Activated CD4-positive, alpha-beta T cell treated with anti-CD3 and anti-CD28 coated beads for 36 hours (primary cell): ENCODE measurements at regions of chr7 and their contacts with region 1.

Region 1: DNA sequence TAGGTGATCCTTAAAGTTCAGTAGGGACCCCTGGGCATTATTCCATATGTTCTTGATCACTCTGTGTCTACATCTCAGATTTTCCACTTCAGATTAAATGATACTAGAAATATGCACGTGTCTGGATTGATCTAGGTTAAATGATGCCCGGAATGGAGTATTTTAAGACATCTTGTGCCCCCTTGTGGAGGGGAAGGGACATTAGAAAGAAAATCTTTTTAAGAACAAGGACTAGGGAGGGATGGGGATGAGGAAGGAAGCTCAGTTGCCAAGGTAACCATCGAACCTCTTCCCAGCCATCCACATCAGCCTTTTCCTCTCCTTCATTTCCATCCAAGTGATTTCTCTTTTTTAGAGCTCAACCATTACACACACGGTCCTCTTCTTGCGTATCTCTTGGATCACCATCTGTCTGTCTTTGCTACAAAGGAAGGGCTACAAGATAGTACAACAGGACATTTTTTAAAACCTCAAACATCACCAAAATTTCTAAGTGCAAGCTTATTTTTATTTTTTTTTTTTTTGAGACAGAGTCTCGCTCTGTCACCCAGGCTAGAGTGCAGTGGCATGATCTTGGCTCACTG is 40.5 kb downstream of the PRSS2 start:
- DNase-seq: peak; percentile 52
- ATAC-seq: no peak
- H3K4me3 Mint-ChIP-seq: peak overlapping the region; percentile 68
- H3K27ac Mint-ChIP-seq: peak overlapping the region; percentile 99
- H3K4me1 Mint-ChIP-seq: peaks cover 83% of the 10 kb centered on the region
- H3K27me3 Mint-ChIP-seq: no peaks in the 10 kb centered on the region

Region 2: GRCh38 chr7:141737834-141738591 is 1073.2 kb before region 1 on chr7 and contains the start of gene SSBP1:
- CTCF ChIA-PET with region 1: no interaction called
- POLR2A ChIA-PET with region 1: interaction called, 3 read pairs
- intact Hi-C with region 1: loop called (anchors 2 to 10 kb)
- DNase-seq: peak; percentile 95
- ATAC-seq: peak; percentile 89
- H3K4me3 Mint-ChIP-seq: peak within 1 kb of the TSS; percentile 96
- H3K27ac Mint-ChIP-seq: peak within 1 kb of the TSS; percentile 97
- H3K4me1 Mint-ChIP-seq: peaks cover 40% of the 10 kb centered on the region
- H3K27me3 Mint-ChIP-seq: no peaks in the 10 kb centered on the region
- total RNA-seq, gene SSBP1: 183 to 245 TPM

Region 3: GRCh38 chr7:142385491-142386340 is 425.5 kb before region 1 on chr7:
- CTCF ChIA-PET with region 1: no interaction called
- POLR2A ChIA-PET with region 1: interaction called, 3 read pairs
- intact Hi-C with region 1: loop called (anchors 2 to 5 kb)
- DNase-seq: peak; percentile 72
- ATAC-seq: peak; percentile 50
- H3K4me3 Mint-ChIP-seq: no peak overlapping the region
- H3K27ac Mint-ChIP-seq: peak overlapping the region; percentile 67
- H3K4me1 Mint-ChIP-seq: peaks cover 27% of the 10 kb centered on the region
- H3K27me3 Mint-ChIP-seq: no peaks in the 10 kb centered on the region

Region 4: DNA sequence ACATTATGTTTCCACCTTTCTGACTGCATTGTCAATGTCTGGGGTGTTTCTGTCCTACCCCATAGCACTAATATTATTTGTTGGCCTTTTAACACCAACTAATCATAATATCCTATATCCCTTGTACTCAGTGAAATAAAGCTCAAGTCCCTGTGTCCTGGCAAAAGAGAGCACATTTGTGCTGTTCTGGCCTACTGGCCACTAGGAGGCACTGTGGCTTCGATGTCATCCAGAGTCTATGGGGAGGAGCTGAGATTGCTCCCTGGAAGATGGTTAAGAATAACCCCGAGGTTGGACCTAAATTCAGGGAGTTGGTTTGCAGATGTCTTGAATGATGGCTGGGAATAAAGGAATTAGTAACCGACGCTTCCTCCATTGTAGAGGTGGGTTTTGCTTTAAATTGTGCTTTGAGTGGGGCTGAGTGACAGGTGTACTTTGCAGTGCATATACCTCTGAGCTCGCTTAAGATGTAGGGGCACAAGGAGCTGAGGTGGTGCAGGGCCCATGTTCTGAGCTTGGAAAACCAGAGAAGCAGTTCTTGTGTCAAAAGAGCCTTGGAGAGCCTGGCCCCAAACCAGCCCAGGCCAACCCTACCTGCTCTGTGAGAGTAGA is 253.2 kb before region 1 on chr7:
- CTCF ChIA-PET with region 1: interaction called, 8 read pairs
- POLR2A ChIA-PET with region 1: no interaction called
- intact Hi-C with region 1: loop called in 1 of 2 experiments (anchors 2 kb)
- DNase-seq: peak; percentile 76
- ATAC-seq: peak; percentile 80
- H3K4me3 Mint-ChIP-seq: peak overlapping the region; percentile 13
- H3K27ac Mint-ChIP-seq: no peak overlapping the region
- H3K4me1 Mint-ChIP-seq: peaks cover 2% of the 10 kb centered on the region
- H3K27me3 Mint-ChIP-seq: no peaks in the 10 kb centered on the region

Region 5: GRCh38 chr7:142711746-142712619 is 99.3 kb before region 1 on chr7:
- CTCF ChIA-PET with region 1: interaction called, 9 read pairs
- POLR2A ChIA-PET with region 1: interaction called, 3 read pairs
- intact Hi-C with region 1: loop called in 1 of 2 experiments (anchors 1 kb)
- DNase-seq: peak; percentile 48
- ATAC-seq: peak; percentile 86
- H3K4me3 Mint-ChIP-seq: peak overlapping the region; percentile 67
- H3K27ac Mint-ChIP-seq: peak overlapping the region; percentile 85
- H3K4me1 Mint-ChIP-seq: peaks cover 65% of the 10 kb centered on the region
- H3K27me3 Mint-ChIP-seq: no peaks in the 10 kb centered on the region

Region 6: GRCh38 chr7:142853739-142854371 is 42.6 kb after region 1 on chr7:
- CTCF ChIA-PET with region 1: interaction called, 6 read pairs
- POLR2A ChIA-PET with region 1: no interaction called
- intact Hi-C with region 1: loop called (anchors 1 to 2 kb)
- DNase-seq: peak; percentile 85
- ATAC-seq: peak; percentile 88
- H3K4me3 Mint-ChIP-seq: peak overlapping the region; percentile 96
- H3K27ac Mint-ChIP-seq: peak overlapping the region; percentile 78
- H3K4me1 Mint-ChIP-seq: peaks cover 27% of the 10 kb centered on the region
- H3K27me3 Mint-ChIP-seq: peaks cover 2% of the 10 kb centered on the region

Region 7: GRCh38 chr7:142885284-142886230 is 74.3 kb after region 1 on chr7 and contains the start of gene TRPV6:
- CTCF ChIA-PET with region 1: no interaction called
- POLR2A ChIA-PET with region 1: no interaction called
- intact Hi-C with region 1: no loop called
- DNase-seq: no peak
- ATAC-seq: no peak
- H3K4me3 Mint-ChIP-seq: no peak within 1 kb of the TSS
- H3K27ac Mint-ChIP-seq: no peak within 1 kb of the TSS
- H3K4me1 Mint-ChIP-seq: no peaks in the 10 kb centered on the region
- H3K27me3 Mint-ChIP-seq: no peaks in the 10 kb centered on the region
- total RNA-seq, gene TRPV6: not detected